ENCODE measurements at regions of chr16 and their contacts with region 1.

Region 1: DNA sequence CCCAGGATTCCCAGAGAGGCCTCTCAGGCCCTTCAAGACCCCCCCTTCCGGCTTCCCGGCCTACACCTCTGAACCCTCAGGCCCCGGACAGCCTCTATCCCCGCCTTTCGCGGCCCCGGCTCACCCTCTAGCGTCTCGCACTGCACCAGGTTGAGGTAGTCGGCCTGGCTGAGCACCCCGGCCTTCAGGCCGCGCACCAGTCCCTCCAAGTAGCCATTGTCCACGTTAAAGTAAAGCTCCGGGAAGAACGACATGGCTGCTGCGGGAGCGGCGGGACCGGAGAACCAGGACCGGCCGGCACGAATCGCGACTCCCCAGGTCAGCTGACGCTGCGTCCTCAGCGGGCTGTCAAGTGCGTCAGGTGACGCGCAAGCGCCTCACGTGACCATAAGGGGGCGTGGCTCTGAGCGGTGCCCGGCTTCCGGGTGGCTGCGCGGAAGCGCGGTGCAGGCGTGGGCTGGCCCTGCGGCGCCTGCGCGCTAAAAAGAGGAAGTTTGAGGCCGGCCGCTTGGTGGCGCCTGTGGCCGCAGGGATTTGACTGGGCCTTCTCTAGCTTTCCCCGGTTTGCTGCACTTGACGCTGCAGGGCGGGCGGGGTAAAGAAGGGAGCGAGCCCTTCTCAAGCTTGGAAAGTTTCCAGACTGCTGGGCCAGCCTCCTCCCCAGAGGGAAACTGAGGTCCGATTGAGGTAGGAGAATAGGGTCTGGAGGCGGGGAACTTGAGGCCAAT is at the start of gene ATP6V0D1:
- DNase-seq: peak; percentile 99
- ATAC-seq: peak; percentile 82
- H3K4me3 Mint-ChIP-seq: peak within 1 kb of the TSS; percentile 99
- H3K27ac Mint-ChIP-seq: peak within 1 kb of the TSS; percentile 99
- H3K4me1 Mint-ChIP-seq: peaks cover 69% of the 10 kb centered on the region
- H3K27me3 Mint-ChIP-seq: no peaks in the 10 kb centered on the region
- CTCF ChIP-seq: no peak
- total RNA-seq, gene ATP6V0D1: 70.2 and 74.5 TPM in 2 replicates

Region 2: GRCh38 chr16:67339453-67339852 is 141.5 kb before region 1 on chr16:
- CTCF ChIA-PET with region 1: no interaction called
- POLR2A ChIA-PET with region 1: no interaction called
- intact Hi-C with region 1: no loop called
- DNase-seq: no peak
- ATAC-seq: no peak
- H3K4me3 Mint-ChIP-seq: no peak overlapping the region
- H3K27ac Mint-ChIP-seq: no peak overlapping the region
- H3K4me1 Mint-ChIP-seq: no peaks in the 10 kb centered on the region
- H3K27me3 Mint-ChIP-seq: peaks cover 3% of the 10 kb centered on the region
- CTCF ChIP-seq: no peak

Region 3: GRCh38 chr16:67470359-67470758 is 10.6 kb before region 1 on chr16:
- CTCF ChIA-PET with region 1: interaction called, 8 read pairs
- POLR2A ChIA-PET with region 1: interaction called, 9 read pairs
- intact Hi-C with region 1: loop called (anchors 1 kb)
- DNase-seq: no peak
- ATAC-seq: no peak
- H3K4me3 Mint-ChIP-seq: no peak overlapping the region
- H3K27ac Mint-ChIP-seq: no peak overlapping the region
- H3K4me1 Mint-ChIP-seq: peaks cover 60% of the 10 kb centered on the region
- H3K27me3 Mint-ChIP-seq: no peaks in the 10 kb centered on the region
- CTCF ChIP-seq: no peak

Region 4: GRCh38 chr16:67514382-67514828 is 33.4 kb after region 1 on chr16:
- CTCF ChIA-PET with region 1: interaction called, 29 read pairs
- POLR2A ChIA-PET with region 1: interaction called, 73 read pairs
- intact Hi-C with region 1: loop called (anchors 1 kb)
- DNase-seq: no peak
- ATAC-seq: peak; percentile 23
- H3K4me3 Mint-ChIP-seq: peak overlapping the region; percentile 60
- H3K27ac Mint-ChIP-seq: peak overlapping the region; percentile 94
- H3K4me1 Mint-ChIP-seq: peaks cover 73% of the 10 kb centered on the region
- H3K27me3 Mint-ChIP-seq: no peaks in the 10 kb centered on the region
- CTCF ChIP-seq: no peak

Region 5: GRCh38 chr16:67537270-67537635 is 56.3 kb after region 1 on chr16:
- CTCF ChIA-PET with region 1: interaction called, 12 read pairs
- POLR2A ChIA-PET with region 1: interaction called, 10 read pairs
- intact Hi-C with region 1: loop called (anchors 2 kb)
- DNase-seq: no peak
- ATAC-seq: peak; percentile 47
- H3K4me3 Mint-ChIP-seq: peak overlapping the region; percentile 90
- H3K27ac Mint-ChIP-seq: peak overlapping the region; percentile 93
- H3K4me1 Mint-ChIP-seq: peaks cover 82% of the 10 kb centered on the region
- H3K27me3 Mint-ChIP-seq: no peaks in the 10 kb centered on the region
- CTCF ChIP-seq: no peak

Region 6: GRCh38 chr16:67641779-67642708 is 161.0 kb after region 1 on chr16:
- CTCF ChIA-PET with region 1: interaction called, 11 read pairs
- POLR2A ChIA-PET with region 1: interaction called, 11 read pairs
- intact Hi-C with region 1: loop called (anchors 1 kb)
- DNase-seq: no peak
- ATAC-seq: no peak
- H3K4me3 Mint-ChIP-seq: no peak overlapping the region
- H3K27ac Mint-ChIP-seq: no peak overlapping the region
- H3K4me1 Mint-ChIP-seq: peaks cover 17% of the 10 kb centered on the region
- H3K27me3 Mint-ChIP-seq: no peaks in the 10 kb centered on the region
- CTCF ChIP-seq: no peak

Region 7: DNA sequence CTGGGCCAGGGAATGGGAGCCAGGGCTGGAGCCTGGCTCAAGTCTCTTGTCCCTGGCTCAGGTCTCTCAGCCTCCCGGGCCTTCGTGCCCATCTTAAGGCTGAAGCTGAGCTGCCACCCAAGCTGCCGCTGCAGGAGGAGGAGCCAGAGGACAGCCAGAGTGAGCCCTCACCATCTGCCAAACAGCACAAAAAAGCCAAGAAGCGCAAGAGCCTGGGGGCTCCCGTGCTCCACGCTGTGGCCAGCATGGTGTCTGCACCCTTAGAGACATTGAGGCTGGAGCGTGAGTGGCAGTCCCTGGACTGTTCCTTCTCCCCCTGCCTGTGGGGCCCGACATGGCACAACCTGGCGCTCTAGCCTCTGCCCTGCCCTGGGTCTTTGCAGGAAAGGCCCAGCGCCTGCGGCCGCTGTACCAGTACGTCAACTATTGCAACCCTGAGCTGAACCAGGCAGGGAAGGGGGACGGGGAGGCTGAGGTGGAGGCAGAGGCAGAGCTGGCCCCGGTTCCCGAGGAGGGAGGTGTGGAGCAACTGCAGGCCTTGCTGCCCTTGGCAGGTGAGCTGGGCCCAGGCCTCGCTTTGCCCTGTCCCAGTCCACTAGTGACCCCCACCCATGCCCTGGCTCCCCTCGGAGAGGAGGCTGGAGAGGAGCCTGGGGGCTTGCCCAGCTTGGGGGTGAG is 187.0 kb after region 1 on chr16:
- CTCF ChIA-PET with region 1: interaction called, 13 read pairs
- POLR2A ChIA-PET with region 1: interaction called, 3 read pairs
- intact Hi-C with region 1: loop called (anchors 1 kb)
- DNase-seq: peak; percentile 66
- ATAC-seq: peak; percentile 84
- H3K4me3 Mint-ChIP-seq: peak overlapping the region; percentile 87
- H3K27ac Mint-ChIP-seq: peak overlapping the region; percentile 85
- H3K4me1 Mint-ChIP-seq: peaks cover 49% of the 10 kb centered on the region
- H3K27me3 Mint-ChIP-seq: no peaks in the 10 kb centered on the region
- CTCF ChIP-seq: no peak

Region 8: DNA sequence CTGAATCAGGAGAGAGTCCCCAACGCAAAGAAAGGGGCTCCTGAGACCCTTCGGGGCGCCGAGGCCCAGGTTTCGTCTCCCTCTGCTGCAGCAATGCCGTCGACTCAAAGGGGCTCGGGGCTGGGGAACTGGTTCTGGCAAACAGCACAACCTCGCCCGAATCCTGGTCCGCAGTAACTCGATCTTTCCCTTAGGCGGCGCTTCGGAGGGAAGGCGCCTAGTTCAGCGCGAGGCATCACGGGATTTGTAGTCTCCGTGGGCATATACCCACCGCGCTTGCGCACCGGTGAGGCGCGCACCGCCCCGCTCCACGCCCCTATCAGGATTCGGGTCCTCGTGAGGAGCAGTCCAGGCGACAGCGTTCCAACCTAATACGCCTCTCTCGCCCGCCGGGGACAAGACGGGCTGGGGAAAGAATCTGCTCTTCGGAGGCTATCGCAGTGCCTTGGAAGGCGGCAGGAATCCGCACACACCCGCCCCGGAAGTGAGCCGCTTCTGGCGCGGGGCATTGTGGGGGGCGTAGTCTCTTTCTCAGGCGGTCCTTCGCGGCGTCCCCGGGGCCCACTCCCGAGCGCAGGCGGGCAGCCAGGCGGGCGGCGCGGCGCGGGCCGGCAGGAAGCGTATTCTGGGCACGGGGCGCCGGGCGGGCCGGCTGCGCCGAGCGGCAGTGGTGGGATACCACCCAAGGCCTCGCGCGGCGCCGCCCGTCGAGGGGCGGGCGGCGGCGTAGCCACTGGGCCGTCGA is 360.9 kb after region 1 on chr16 and contains the start of gene THAP11:
- CTCF ChIA-PET with region 1: no interaction called
- POLR2A ChIA-PET with region 1: no interaction called
- intact Hi-C with region 1: no loop called
- DNase-seq: peak; percentile 95
- ATAC-seq: peak; percentile 54
- H3K4me3 Mint-ChIP-seq: peak within 1 kb of the TSS; percentile 95
- H3K27ac Mint-ChIP-seq: peak within 1 kb of the TSS; percentile 95
- H3K4me1 Mint-ChIP-seq: peaks cover 43% of the 10 kb centered on the region
- H3K27me3 Mint-ChIP-seq: no peaks in the 10 kb centered on the region
- CTCF ChIP-seq: peak; percentile 38
- total RNA-seq, gene THAP11: 24.2 and 24.9 TPM in 2 replicates

Region 9: GRCh38 chr16:68237243-68238028 is 756.4 kb after region 1 on chr16:
- CTCF ChIA-PET with region 1: no interaction called
- POLR2A ChIA-PET with region 1: no interaction called
- intact Hi-C with region 1: loop called (anchors 10 kb)
- DNase-seq: peak; percentile 84
- ATAC-seq: peak; percentile 83
- H3K4me3 Mint-ChIP-seq: peak overlapping the region; percentile 93
- H3K27ac Mint-ChIP-seq: peak overlapping the region; percentile 79
- H3K4me1 Mint-ChIP-seq: peaks cover 33% of the 10 kb centered on the region
- H3K27me3 Mint-ChIP-seq: no peaks in the 10 kb centered on the region
- CTCF ChIP-seq: no peak

Measured in activated B cell treated with CpG ODN at 0.5 μM for 24 hours (primary cell).